B cell (primary cell): ENCODE measurements at regions of chr19 and their contacts with region 1.

Region 1: GRCh38 chr19:40403262-40403984 is 9.8 kb downstream of the PRX start:
- DNase-seq: peak; percentile 86
- ATAC-seq: peak; percentile 81
- H3K4me3 ChIP-seq: peak overlapping the region; percentile 27 to 84 (median 74)
- H3K4me3 Mint-ChIP-seq: peak overlapping the region; percentile 97
- H3K27ac ChIP-seq: peak overlapping the region; percentile 30 to 49
- H3K27ac Mint-ChIP-seq: peak overlapping the region; percentile 93
- H3K4me1 ChIP-seq: peaks cover 6 to 18% of the 10 kb centered on the region in 2 donors
- H3K4me1 Mint-ChIP-seq: peaks cover 29% of the 10 kb centered on the region
- H3K27me3 ChIP-seq: peaks cover 0 to 6% (median 3%) of the 10 kb centered on the region in 4 experiments
- H3K27me3 Mint-ChIP-seq: peaks cover 8% of the 10 kb centered on the region
- CTCF ChIP-seq: no peak

Region 2: GRCh38 chr19:39602261-39602660 is 801.2 kb before region 1 on chr19 and contains the start of gene LGALS13:
- CTCF ChIA-PET with region 1: no interaction called
- POLR2A ChIA-PET with region 1: no interaction called
- intact Hi-C with region 1: no loop called
- DNase-seq: no peak
- ATAC-seq: no peak
- H3K4me3 ChIP-seq: no peak within 1 kb of the TSS
- H3K4me3 Mint-ChIP-seq: no peak within 1 kb of the TSS
- H3K27ac ChIP-seq: no peak within 1 kb of the TSS
- H3K27ac Mint-ChIP-seq: no peak within 1 kb of the TSS
- H3K4me1 ChIP-seq: no peaks in the 10 kb centered on the region
- H3K4me1 Mint-ChIP-seq: no peaks in the 10 kb centered on the region
- H3K27me3 ChIP-seq: peaks cover 0 to 14% (median 7%) of the 10 kb centered on the region in 4 experiments
- H3K27me3 Mint-ChIP-seq: peaks cover 50% of the 10 kb centered on the region
- CTCF ChIP-seq: no peak
- total RNA-seq, gene LGALS13: not detected in 2 replicates

Region 3: GRCh38 chr19:40165362-40165937 is 238.0 kb before region 1 on chr19:
- CTCF ChIA-PET with region 1: no interaction called
- POLR2A ChIA-PET with region 1: interaction called, 14 read pairs
- intact Hi-C with region 1: no loop called
- DNase-seq: peak; percentile 65
- ATAC-seq: peak; percentile 52
- H3K4me3 ChIP-seq: no peak overlapping the region
- H3K4me3 Mint-ChIP-seq: peak overlapping the region; percentile 61
- H3K27ac ChIP-seq: no peak overlapping the region
- H3K27ac Mint-ChIP-seq: peak overlapping the region; percentile 67
- H3K4me1 ChIP-seq: peaks cover 27 to 38% of the 10 kb centered on the region in 2 donors
- H3K4me1 Mint-ChIP-seq: peaks cover 25% of the 10 kb centered on the region
- H3K27me3 ChIP-seq: no peaks in the 10 kb centered on the region
- H3K27me3 Mint-ChIP-seq: no peaks in the 10 kb centered on the region
- CTCF ChIP-seq: peak; percentile 71

Region 4: DNA sequence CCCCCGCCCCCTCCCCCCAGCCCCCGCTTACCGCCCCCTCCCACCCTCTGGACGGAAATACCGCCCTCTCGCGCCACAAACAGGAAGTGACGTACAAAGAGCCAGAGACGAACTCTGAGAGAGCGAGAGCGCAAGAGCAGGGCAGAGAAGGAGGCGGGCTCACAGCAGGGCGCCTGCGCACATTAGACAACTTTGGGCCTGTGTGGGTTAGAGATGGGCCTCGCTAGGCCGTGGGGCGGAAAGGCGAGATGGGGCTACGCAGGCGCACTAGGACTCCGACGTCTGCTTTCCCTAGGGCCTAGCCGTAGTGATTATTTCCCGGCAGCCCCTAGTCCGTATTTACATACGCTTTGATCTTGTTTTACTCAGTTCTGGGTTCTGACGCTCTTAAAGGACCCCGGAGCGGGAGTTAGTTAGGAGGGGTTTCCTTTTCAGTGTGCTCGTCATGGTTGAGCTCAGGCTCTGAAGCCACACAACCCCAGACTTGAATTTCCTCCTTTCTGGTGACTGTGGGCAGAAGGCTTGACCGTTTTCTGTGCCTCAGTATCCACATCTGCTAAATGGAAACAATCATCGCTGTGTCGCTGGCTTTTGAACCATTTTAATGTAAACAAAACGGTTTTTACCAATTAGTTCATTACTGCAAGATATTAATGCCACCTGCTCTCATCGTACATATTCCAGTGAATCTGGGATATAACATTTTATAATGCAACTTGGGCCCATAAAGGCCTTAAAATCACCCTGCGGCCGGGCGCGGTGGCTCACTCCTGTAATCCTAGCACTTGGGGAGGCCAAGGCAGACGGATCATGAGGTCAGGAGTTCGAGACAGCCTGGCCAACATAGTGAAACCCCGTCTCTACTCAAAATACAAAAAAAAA is 117.8 kb before region 1 on chr19:
- CTCF ChIA-PET with region 1: no interaction called
- POLR2A ChIA-PET with region 1: no interaction called
- intact Hi-C with region 1: loop called (anchors 1 kb)
- DNase-seq: peak; percentile 100
- ATAC-seq: peak; percentile 74
- H3K4me3 ChIP-seq: peak overlapping the region in 4 of 5 experiments; percentile 68 to 89 (median 78)
- H3K4me3 Mint-ChIP-seq: peak overlapping the region; percentile 87
- H3K27ac ChIP-seq: peak overlapping the region; percentile 99 to 100
- H3K27ac Mint-ChIP-seq: peak overlapping the region; percentile 97
- H3K4me1 ChIP-seq: peaks cover 40 to 54% of the 10 kb centered on the region in 2 donors
- H3K4me1 Mint-ChIP-seq: peaks cover 53% of the 10 kb centered on the region
- H3K27me3 ChIP-seq: no peaks in the 10 kb centered on the region
- H3K27me3 Mint-ChIP-seq: no peaks in the 10 kb centered on the region
- CTCF ChIP-seq: no peak

Region 5: GRCh38 chr19:40348125-40348913 is 55.1 kb before region 1 on chr19 and contains the starts of genes C19orf47 and PLD3:
- CTCF ChIA-PET with region 1: no interaction called
- POLR2A ChIA-PET with region 1: interaction called, 3 read pairs
- intact Hi-C with region 1: loop called (anchors 1 kb)
- DNase-seq: peak; percentile 99
- ATAC-seq: peak; percentile 94
- H3K4me3 ChIP-seq: peak within 1 kb of the TSS; percentile 59 to 90 (median 86)
- H3K4me3 Mint-ChIP-seq: peak within 1 kb of the TSS; percentile 91
- H3K27ac ChIP-seq: peak within 1 kb of the TSS; percentile 40 to 83
- H3K27ac Mint-ChIP-seq: peak within 1 kb of the TSS; percentile 97
- H3K4me1 ChIP-seq: peaks cover 12 to 17% of the 10 kb centered on the region in 2 donors
- H3K4me1 Mint-ChIP-seq: peaks cover 27% of the 10 kb centered on the region
- H3K27me3 ChIP-seq: no peaks in the 10 kb centered on the region
- H3K27me3 Mint-ChIP-seq: no peaks in the 10 kb centered on the region
- CTCF ChIP-seq: no peak
- total RNA-seq, gene C19orf47: 14.3 and 16.7 TPM in 2 replicates
- total RNA-seq, gene PLD3: 61.7 and 69.0 TPM in 2 replicates

Region 6: DNA sequence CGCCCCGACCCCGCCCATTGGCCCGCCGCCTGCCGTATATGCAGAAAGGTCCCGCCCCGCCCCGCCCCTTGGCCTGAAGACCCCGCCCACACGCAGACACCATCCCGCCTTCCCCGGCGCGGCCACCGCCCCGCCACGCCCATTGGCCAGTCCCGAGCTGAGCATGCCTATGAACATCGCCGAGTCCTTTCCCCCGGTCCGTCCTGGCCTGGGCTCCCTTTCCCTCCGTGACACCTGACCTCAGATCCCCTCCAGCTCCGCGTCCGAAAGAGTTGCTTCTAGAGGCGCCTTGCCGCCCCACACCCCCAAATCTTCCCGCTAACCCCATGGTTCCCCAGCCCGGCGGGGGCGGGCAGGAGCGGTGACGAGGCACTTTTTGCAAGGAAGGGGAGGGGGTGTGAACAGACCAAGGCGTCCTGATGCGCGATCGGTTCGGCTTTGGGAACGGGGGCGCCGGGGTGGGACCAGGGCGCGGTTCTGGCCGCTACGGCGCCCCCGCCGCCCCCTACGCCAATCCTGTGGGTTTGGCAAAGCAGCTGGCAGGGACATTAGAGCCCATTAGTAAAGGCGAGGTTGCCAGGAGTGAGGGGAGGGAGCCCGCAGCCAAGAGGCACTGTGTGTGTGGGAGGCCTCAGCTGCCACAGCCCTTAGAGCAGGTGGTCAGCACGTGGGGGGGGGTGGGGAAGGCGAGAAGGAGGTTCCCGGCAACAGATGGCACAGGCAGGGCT is 287.4 kb after region 1 on chr19:
- CTCF ChIA-PET with region 1: no interaction called
- POLR2A ChIA-PET with region 1: no interaction called
- intact Hi-C with region 1: no loop called
- DNase-seq: peak; percentile 93
- ATAC-seq: peak; percentile 74
- H3K4me3 ChIP-seq: peak overlapping the region; percentile 26 to 87 (median 62)
- H3K4me3 Mint-ChIP-seq: peak overlapping the region; percentile 97
- H3K27ac ChIP-seq: peak overlapping the region in 1 of 2 donors; percentile 11
- H3K27ac Mint-ChIP-seq: peak overlapping the region; percentile 88
- H3K4me1 ChIP-seq: peaks cover 44 to 51% of the 10 kb centered on the region in 2 donors
- H3K4me1 Mint-ChIP-seq: peaks cover 13% of the 10 kb centered on the region
- H3K27me3 ChIP-seq: no peaks in the 10 kb centered on the region
- H3K27me3 Mint-ChIP-seq: no peaks in the 10 kb centered on the region
- CTCF ChIP-seq: no peak

Region 7: GRCh38 chr19:41298348-41298964 is 895.0 kb after region 1 on chr19:
- CTCF ChIA-PET with region 1: no interaction called
- POLR2A ChIA-PET with region 1: no interaction called
- intact Hi-C with region 1: loop called (anchors 10 kb)
- DNase-seq: peak; percentile 85
- ATAC-seq: peak; percentile 25
- H3K4me3 ChIP-seq: no peak overlapping the region
- H3K4me3 Mint-ChIP-seq: peak overlapping the region; percentile 86
- H3K27ac ChIP-seq: peak overlapping the region; percentile 83 to 100
- H3K27ac Mint-ChIP-seq: peak overlapping the region; percentile 98
- H3K4me1 ChIP-seq: peaks cover 58 to 65% of the 10 kb centered on the region in 2 donors
- H3K4me1 Mint-ChIP-seq: peaks cover 71% of the 10 kb centered on the region
- H3K27me3 ChIP-seq: no peaks in the 10 kb centered on the region
- H3K27me3 Mint-ChIP-seq: no peaks in the 10 kb centered on the region
- CTCF ChIP-seq: no peak